ENCODE measurements at regions of chr19 and their contacts with region 1.

Region 1: GRCh38 chr19:43595999-43596841 is at the starts of genes IRGQ and ZNF576:
- DNase-seq: peak; percentile 98 to 100 (median 99)
- ATAC-seq: peak; percentile 81 to 85 (median 84)
- H3K4me3 ChIP-seq: peak within 1 kb of the TSS; percentile 82 to 88
- H3K4me3 Mint-ChIP-seq: peak within 1 kb of the TSS; percentile 92 to 99 (median 95)
- H3K27ac ChIP-seq: peak within 1 kb of the TSS; percentile 95
- H3K27ac Mint-ChIP-seq: peak within 1 kb of the TSS; percentile 99 to 100
- H3K4me1 ChIP-seq: peaks cover 9 to 43% of the 10 kb centered on the region in 2 experiments
- H3K4me1 Mint-ChIP-seq: peaks cover 43 to 47% (median 46%) of the 10 kb centered on the region in 3 donors
- H3K27me3 ChIP-seq: no peaks in the 10 kb centered on the region
- H3K27me3 Mint-ChIP-seq: no peaks in the 10 kb centered on the region
- total RNA-seq, gene IRGQ: 17.5 to 30.2 (median 19.9) TPM
- total RNA-seq, gene ZNF576: 5.4 to 19.6 (median 16.9) TPM

Region 2: DNA sequence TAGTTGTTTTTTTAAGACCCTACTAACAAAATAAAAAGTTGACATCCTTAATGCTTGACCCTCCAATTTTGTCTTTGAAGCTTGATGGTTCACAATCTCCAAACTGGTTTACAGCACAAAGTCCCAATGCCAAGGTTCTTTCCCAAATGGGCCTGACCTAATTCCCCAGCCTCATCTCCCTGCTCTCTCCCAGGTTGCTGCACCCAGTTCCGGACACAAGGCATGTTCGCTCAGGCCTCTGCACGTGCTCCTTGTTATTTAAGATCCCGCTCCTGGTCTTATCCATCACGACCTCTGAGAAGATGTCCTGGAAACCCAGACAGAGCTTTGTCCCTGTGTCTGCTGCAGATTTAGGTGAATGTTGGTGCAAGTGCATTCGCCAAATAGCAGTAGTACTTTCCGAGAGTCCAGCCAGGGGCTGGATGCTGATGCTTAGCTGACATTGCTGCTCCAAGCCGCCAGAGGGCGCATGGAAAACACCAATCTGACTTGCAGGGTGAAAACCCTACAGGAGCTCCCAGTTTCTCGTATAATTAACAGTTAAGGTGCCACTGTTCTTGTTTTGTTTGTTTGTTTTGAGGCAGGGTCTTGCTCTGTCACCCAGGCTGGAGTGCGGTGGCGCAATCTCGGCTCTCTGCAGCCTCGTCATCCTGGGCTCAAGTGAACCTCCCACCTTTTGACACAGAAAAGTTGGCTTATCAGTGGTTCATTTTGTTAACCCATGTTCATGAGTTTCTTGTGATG is 149.3 kb before region 1 on chr19:
- CTCF ChIA-PET with region 1: interaction called, 3 to 12 read pairs
- POLR2A ChIA-PET with region 1: no interaction called
- DNase-seq: peak; percentile 58 to 90 (median 77)
- ATAC-seq: peak; percentile 88 to 94 (median 90)
- H3K4me3 ChIP-seq: no peak overlapping the region
- H3K4me3 Mint-ChIP-seq: no peak overlapping the region
- H3K27ac ChIP-seq: no peak overlapping the region
- H3K27ac Mint-ChIP-seq: peak overlapping the region in 1 of 2 donors; percentile 76
- H3K4me1 ChIP-seq: peaks cover 0 to 13% of the 10 kb centered on the region in 2 experiments
- H3K4me1 Mint-ChIP-seq: peaks cover 27 to 39% (median 39%) of the 10 kb centered on the region in 3 donors
- H3K27me3 ChIP-seq: no peaks in the 10 kb centered on the region
- H3K27me3 Mint-ChIP-seq: no peaks in the 10 kb centered on the region

Region 3: GRCh38 chr19:43519436-43520088 is 76.7 kb before region 1 on chr19:
- CTCF ChIA-PET with region 1: interaction called, 4 to 14 read pairs
- POLR2A ChIA-PET with region 1: no interaction called
- DNase-seq: peak; percentile 42 to 92 (median 73)
- ATAC-seq: peak; percentile 84 to 99 (median 86)
- H3K4me3 ChIP-seq: no peak overlapping the region
- H3K4me3 Mint-ChIP-seq: no peak overlapping the region
- H3K27ac ChIP-seq: no peak overlapping the region
- H3K27ac Mint-ChIP-seq: peak overlapping the region; percentile 26 to 65
- H3K4me1 ChIP-seq: peaks cover 5 to 9% of the 10 kb centered on the region in 2 experiments
- H3K4me1 Mint-ChIP-seq: peaks cover 12 to 18% (median 15%) of the 10 kb centered on the region in 3 donors
- H3K27me3 ChIP-seq: no peaks in the 10 kb centered on the region
- H3K27me3 Mint-ChIP-seq: no peaks in the 10 kb centered on the region

Region 4: GRCh38 chr19:43619262-43620060 is 23.2 kb after region 1 on chr19 and contains the start of gene ZNF428:
- CTCF ChIA-PET with region 1: interaction called in 1 of 2 experiments, 10 read pairs
- POLR2A ChIA-PET with region 1: interaction called in 1 of 2 experiments, 4 read pairs
- DNase-seq: peak; percentile 73 to 93 (median 80)
- ATAC-seq: peak; percentile 89 to 93 (median 91)
- H3K4me3 ChIP-seq: peak within 1 kb of the TSS; percentile 78 to 90
- H3K4me3 Mint-ChIP-seq: peak within 1 kb of the TSS; percentile 94 to 99 (median 96)
- H3K27ac ChIP-seq: peak within 1 kb of the TSS; percentile 84
- H3K27ac Mint-ChIP-seq: peak within 1 kb of the TSS; percentile 97
- H3K4me1 ChIP-seq: peaks cover 9 to 23% of the 10 kb centered on the region in 2 experiments
- H3K4me1 Mint-ChIP-seq: peaks cover 32 to 41% (median 36%) of the 10 kb centered on the region in 3 donors
- H3K27me3 ChIP-seq: no peaks in the 10 kb centered on the region
- H3K27me3 Mint-ChIP-seq: no peaks in the 10 kb centered on the region
- total RNA-seq, gene ZNF428: 28.9 to 35.2 (median 34.5) TPM

Region 5: DNA sequence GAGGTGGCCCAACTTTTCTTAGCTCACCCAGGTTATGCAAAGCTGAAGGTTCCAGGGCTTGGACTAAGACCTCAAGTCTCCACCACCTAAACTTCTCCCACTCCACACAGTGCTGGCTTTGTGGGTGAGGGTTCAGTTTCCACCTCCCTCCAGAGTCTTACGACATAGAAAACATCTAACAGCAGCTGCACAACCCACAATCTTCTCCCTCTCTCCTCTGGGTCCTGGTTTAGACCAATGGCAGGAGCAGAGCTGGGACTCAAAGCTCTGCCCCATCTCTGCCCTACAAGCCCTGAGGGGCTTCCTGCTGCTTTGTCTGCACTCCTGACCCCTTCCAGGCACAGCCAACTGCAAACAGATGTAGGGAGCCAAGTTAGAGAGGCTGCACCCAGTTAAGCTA is 135.6 kb after region 1 on chr19:
- CTCF ChIA-PET with region 1: no interaction called
- POLR2A ChIA-PET with region 1: no interaction called
- DNase-seq: no peak
- ATAC-seq: no peak
- H3K4me3 ChIP-seq: no peak overlapping the region
- H3K4me3 Mint-ChIP-seq: no peak overlapping the region
- H3K27ac ChIP-seq: no peak overlapping the region
- H3K27ac Mint-ChIP-seq: no peak overlapping the region
- H3K4me1 ChIP-seq: no peaks in the 10 kb centered on the region
- H3K4me1 Mint-ChIP-seq: no peaks in the 10 kb centered on the region
- H3K27me3 ChIP-seq: no peaks in the 10 kb centered on the region
- H3K27me3 Mint-ChIP-seq: no peaks in the 10 kb centered on the region